Activated T-helper 2 cell treated with anti-CD3 and anti-CD28 coated beads, Interferon-gamma antibody, Interleukin-2, Interleukin-4, amounts not matched to agents 10 μg/mL and 5 μg/mL and 100 μg/mL, durations not matched to agents 14 hours and 24 hours and 36 hours (primary cell): ENCODE measurements at regions of chr1 and their contacts with region 1.

Region 1: GRCh38 chr1:8477166-8477982 is 159.5 kb downstream of the SLC45A1 start:
- DNase-seq: no peak
- H3K4me3 Mint-ChIP-seq: peak overlapping the region; percentile 47
- H3K27ac Mint-ChIP-seq: peak overlapping the region; percentile 88
- H3K4me1 Mint-ChIP-seq: peaks cover 62% of the 10 kb centered on the region
- H3K27me3 Mint-ChIP-seq: no peaks in the 10 kb centered on the region

Region 2: DNA sequence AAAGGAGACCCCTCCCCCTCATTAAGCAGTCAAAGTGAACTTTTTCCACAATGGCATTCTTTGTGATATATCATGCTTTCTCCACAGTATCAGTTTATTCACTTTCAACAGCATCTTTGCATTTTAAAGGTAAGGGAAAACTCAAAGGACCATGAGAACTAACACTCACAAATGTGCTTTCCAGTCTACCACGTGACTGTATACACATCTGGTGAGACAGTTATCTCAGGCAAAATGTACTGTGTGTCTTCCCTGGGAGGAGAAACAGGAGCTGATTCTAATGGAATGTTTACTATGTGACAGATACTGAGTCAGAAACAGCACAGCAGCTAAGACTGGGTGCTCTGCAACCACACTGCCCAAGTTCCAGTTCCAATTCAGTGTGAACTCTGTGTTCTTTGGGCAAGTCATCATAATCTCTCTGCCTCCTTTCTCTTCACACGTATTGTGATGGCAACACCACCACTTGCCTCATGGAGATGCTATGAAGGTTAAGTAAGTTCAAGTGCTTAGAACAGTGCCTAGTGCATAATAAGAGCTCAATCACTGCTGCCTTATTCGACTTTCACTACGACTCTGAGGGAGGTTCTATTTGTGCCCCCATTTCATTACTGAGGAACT is 80.5 kb before region 1 on chr1:
- intact Hi-C with region 1: loop called (anchors 1 kb)
- DNase-seq: no peak
- H3K4me3 Mint-ChIP-seq: peak overlapping the region; percentile 10
- H3K27ac Mint-ChIP-seq: peak overlapping the region; percentile 64
- H3K4me1 Mint-ChIP-seq: peaks cover 63% of the 10 kb centered on the region
- H3K27me3 Mint-ChIP-seq: no peaks in the 10 kb centered on the region

Region 3: GRCh38 chr1:8448911-8449661 is 28.3 kb before region 1 on chr1:
- intact Hi-C with region 1: loop called (anchors 1 kb)
- DNase-seq: no peak
- H3K4me3 Mint-ChIP-seq: no peak overlapping the region
- H3K27ac Mint-ChIP-seq: no peak overlapping the region
- H3K4me1 Mint-ChIP-seq: peaks cover 27% of the 10 kb centered on the region
- H3K27me3 Mint-ChIP-seq: no peaks in the 10 kb centered on the region

Region 4: GRCh38 chr1:8497210-8497801 is 19.9 kb after region 1 on chr1:
- intact Hi-C with region 1: loop called (anchors 1 kb)
- DNase-seq: no peak
- H3K4me3 Mint-ChIP-seq: no peak overlapping the region
- H3K27ac Mint-ChIP-seq: peak overlapping the region; percentile 6
- H3K4me1 Mint-ChIP-seq: peaks cover 22% of the 10 kb centered on the region
- H3K27me3 Mint-ChIP-seq: no peaks in the 10 kb centered on the region

Region 5: GRCh38 chr1:8510041-8510823 is 32.9 kb after region 1 on chr1:
- intact Hi-C with region 1: loop called (anchors 1 kb)
- DNase-seq: peak; percentile 32
- H3K4me3 Mint-ChIP-seq: peak overlapping the region; percentile 48
- H3K27ac Mint-ChIP-seq: peak overlapping the region; percentile 81
- H3K4me1 Mint-ChIP-seq: peaks cover 41% of the 10 kb centered on the region
- H3K27me3 Mint-ChIP-seq: no peaks in the 10 kb centered on the region